ENCODE measurements at regions of chr2 and their contacts with region 1.

Region 1: GRCh38 chr2:222976521-222977076 is 75.4 kb upstream of the KCNE4 start:
- DNase-seq: no peak
- ATAC-seq: no peak
- H3K4me3 ChIP-seq: no peak overlapping the region
- H3K27ac ChIP-seq: no peak overlapping the region
- H3K4me1 ChIP-seq: no peaks in the 10 kb centered on the region
- H3K27me3 ChIP-seq: no peaks in the 10 kb centered on the region
- CTCF ChIP-seq: no peak
- POLR2A ChIP-seq: no peak

Region 2: DNA sequence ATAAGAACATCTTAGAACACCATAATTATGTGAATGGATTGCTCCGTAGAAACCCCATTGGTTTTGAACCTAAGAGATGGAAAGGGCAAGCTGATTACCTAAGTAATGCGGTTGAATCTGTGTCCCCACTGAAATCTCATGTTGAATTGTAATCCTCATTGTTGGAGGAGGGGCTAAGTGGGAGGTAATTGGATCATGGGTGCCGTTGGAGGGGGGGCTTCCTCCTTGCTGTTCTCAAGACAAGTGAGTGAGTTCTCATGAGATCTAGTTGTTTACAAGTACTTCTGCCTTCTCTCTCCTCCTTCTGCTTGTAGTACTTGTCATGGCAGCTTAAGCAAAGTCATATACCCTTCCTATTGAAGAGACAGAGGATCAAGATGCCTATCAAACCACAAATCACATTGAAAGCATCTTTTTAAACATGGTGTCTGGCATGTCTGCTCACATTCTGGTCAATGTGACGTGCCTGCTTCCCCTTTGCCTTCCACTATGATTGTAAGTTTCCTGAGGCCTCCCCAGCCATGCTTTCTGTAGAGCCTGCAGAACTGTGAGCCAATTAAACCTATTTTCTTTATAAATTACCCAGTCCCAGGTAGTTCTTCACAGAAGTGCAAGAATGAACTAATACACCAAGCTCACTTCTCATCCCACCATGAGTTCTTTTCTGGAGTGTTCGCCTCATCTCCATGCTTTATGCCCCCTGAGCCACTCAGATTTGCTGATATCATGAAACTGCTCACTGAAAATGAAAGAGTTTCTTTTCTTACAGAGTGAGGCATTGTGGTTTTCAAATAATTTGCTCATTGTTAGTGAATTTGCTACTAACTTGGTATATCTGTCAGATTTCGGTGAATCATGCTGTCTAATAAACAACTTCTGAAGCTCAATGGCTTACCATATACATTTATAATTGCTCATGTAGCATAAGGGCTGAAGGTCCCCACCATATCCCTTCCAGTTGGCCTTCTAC is 99.0 kb after region 1 on chr2:
- intact Hi-C with region 1: no loop called
- DNase-seq: no peak
- ATAC-seq: no peak
- H3K4me3 ChIP-seq: no peak overlapping the region
- H3K27ac ChIP-seq: no peak overlapping the region
- H3K4me1 ChIP-seq: no peaks in the 10 kb centered on the region
- H3K27me3 ChIP-seq: no peaks in the 10 kb centered on the region
- CTCF ChIP-seq: no peak
- POLR2A ChIP-seq: no peak

Region 3: DNA sequence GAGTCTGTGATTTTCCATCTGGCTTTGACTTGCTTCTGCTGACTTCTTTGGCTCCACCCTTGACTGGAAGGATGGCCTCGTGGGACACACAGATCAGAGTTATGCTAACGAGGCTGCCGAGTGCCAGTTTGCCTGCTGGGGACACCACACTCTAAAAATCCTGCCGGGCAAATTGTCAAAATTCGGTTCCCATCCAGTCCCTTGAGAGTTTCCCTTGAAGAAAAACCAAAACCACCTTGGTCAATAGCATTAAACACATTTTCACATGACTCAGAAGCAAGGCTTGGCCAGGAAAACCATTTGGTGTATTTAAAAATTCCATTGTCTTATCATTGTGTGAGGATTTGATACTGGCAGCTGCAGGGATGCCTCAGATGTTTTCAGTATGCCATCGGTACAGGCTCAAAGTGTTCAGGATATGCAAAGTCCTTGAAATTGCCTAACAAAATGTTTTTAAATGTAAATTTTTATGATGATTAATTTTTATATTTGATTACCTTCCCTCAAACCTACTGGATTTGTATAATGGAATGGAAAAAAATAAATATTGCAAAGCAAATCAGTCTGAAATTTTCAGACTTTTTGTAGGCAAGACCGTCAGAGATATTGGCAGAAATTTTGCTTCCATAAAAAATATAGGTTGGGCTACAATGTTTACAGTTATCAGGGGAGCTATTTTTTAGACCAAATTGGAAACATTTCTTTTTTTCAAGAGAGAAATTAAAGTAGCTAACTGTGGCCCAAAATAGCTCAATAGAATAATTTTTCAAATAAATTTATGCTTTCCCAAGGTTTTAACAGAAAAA is 117.0 kb after region 1 on chr2:
- intact Hi-C with region 1: loop called in 1 of 2 experiments (anchors 10 kb)
- DNase-seq: no peak
- ATAC-seq: no peak
- H3K4me3 ChIP-seq: no peak overlapping the region
- H3K27ac ChIP-seq: no peak overlapping the region
- H3K4me1 ChIP-seq: no peaks in the 10 kb centered on the region
- H3K27me3 ChIP-seq: no peaks in the 10 kb centered on the region
- CTCF ChIP-seq: no peak
- POLR2A ChIP-seq: no peak